GM10248 (cell line): ENCODE measurements at regions of chr19 and their contacts with region 1.

Region 1: DNA sequence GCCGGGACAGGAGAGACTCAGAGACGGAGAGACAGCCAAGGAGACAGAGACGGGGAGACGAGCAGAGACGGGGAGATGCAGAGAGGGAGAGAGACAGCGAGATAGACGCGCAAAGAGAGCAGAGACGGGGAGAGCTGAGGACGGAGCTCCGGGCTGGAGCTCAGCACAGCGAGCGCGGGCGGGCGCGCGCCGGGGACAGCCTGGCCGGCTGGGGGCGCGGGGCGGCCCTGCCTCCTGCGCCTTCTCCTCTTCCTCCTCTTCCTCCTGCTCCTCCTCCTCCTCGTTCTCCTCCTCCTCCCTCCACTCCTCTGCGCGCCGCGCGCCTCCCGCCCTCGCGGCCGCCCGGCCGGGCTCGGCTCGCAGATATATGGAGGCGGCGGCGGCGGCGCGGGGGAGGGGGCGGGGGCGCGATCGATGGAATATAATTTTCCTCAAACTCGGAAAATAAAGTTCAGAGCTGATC is at the start of gene ERFL:
- DNase-seq: no peak
- CTCF ChIP-seq: peak; percentile 18

Region 2: GRCh38 chr19:41959056-41960053 is 31.1 kb after region 1 on chr19 and contains the start of gene RABAC1:
- CTCF ChIA-PET with region 1: interaction called, 16 read pairs
- POLR2A ChIA-PET with region 1: no interaction called
- DNase-seq: peak; percentile 95
- CTCF ChIP-seq: peak; percentile 32